PC-3 (cell line): ENCODE measurements at regions of chr3 and their contacts with region 1.

Region 1: GRCh38 chr3:103684904-103685303 is 1250.1 kb downstream of the ZPLD1 start:
- DNase-seq: no peak
- ATAC-seq: no peak
- H3K4me3 ChIP-seq: no peak overlapping the region
- H3K27ac ChIP-seq: no peak overlapping the region
- H3K4me1 ChIP-seq: no peaks in the 10 kb centered on the region
- H3K27me3 ChIP-seq: no peaks in the 10 kb centered on the region
- CTCF ChIP-seq: no peak

Region 2: DNA sequence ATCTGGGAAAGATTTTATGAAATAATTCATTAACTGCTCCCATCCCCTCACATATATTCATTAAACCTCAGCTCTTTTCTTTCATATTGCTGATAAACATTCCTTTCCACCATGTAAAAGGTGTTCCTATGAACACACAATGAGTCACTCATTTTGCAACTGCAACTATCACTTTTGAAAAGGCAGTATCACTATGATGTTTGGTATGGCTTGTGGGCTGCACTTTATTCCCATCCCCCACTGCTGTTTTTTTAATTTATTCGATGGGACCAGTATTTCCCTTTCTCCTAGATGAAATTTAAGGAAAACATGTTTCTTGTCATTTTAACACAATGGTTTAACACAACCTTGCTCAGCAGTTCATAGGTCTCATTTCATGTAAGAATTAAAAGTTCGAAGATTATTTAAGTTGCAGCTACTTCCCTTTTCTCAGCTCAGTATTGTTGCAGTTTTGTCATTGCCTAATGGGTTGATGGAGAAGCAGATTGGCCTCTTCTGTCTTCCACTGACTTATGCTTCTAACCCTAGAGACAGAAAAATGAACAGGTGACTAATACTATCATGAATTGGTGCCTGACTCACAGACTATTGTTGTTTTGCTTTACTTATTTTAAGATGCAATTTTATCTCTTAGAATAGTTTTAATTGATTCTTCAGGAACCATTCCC is 969.7 kb before region 1 on chr3:
- CTCF ChIA-PET with region 1: no interaction called
- POLR2A ChIA-PET with region 1: no interaction called
- intact Hi-C with region 1: loop called (anchors 5 kb)
- DNase-seq: peak; percentile 59
- ATAC-seq: peak; percentile 61
- H3K4me3 ChIP-seq: no peak overlapping the region
- H3K27ac ChIP-seq: no peak overlapping the region
- H3K4me1 ChIP-seq: peaks cover 6% of the 10 kb centered on the region
- H3K27me3 ChIP-seq: peaks cover 19% of the 10 kb centered on the region
- CTCF ChIP-seq: no peak